Activated CD4-positive, alpha-beta T cell treated with anti-CD3 and anti-CD28 coated beads, Interleukin-2, amount 10 ng/mL, durations not matched to agents 24 days and 14 days (primary cell): ENCODE measurements at regions of chr9 and their contacts with region 1.

Region 1: GRCh38 chr9:27573634-27574590 is 631 bp upstream of the C9orf72 start:
- DNase-seq: peak; percentile 98
- H3K4me3 Mint-ChIP-seq: peak overlapping the region; percentile 88
- H3K27ac Mint-ChIP-seq: peak overlapping the region; percentile 100
- H3K4me1 Mint-ChIP-seq: peaks cover 26% of the 10 kb centered on the region
- H3K27me3 Mint-ChIP-seq: peaks cover 7% of the 10 kb centered on the region

Region 2: DNA sequence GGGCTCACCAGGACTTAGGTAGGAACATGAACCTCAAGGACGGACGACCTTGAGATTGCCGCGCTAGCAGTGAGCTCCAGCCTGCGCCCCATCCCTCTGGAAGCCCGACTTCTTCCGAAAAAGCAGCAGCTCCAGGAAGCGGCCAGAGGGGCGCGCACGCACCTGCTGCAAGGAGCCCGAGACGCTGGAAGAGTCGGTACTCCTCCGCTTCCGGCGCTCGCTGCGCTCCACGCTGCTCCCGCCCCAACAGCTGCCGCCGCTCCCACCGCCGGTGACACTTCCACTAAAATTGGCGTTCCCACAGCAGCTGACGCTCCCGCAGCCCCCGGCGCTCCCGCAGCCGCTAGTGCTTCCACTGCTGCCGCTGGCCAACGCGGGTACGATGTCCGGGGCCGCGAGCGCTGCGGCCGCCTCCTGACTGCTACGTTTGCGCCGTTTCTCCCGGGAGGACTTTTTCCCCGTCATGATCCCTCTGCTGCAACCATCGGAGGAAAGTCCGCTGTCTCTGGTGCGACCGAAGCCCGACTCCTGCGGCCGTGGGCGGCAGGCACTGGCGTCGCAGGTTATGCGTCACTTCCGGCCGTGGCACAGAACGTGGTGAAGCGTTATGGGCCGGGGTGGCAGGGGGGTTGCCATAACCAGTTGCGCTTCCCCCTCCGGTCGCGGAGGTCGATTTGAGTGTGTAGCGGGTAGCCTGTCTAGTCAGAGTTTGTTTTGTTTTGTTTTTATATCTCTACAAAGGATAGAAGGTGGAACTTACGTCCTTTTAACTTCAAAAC is 681.5 kb before region 1 on chr9 and contains the start of gene CAAP1:
- intact Hi-C with region 1: loop called (anchors 5 kb)
- DNase-seq: peak; percentile 97
- H3K4me3 Mint-ChIP-seq: peak within 1 kb of the TSS; percentile 91
- H3K27ac Mint-ChIP-seq: peak within 1 kb of the TSS; percentile 97
- H3K4me1 Mint-ChIP-seq: peaks cover 27% of the 10 kb centered on the region
- H3K27me3 Mint-ChIP-seq: no peaks in the 10 kb centered on the region
- total RNA-seq, gene CAAP1: 19.9 and 23.1 TPM in 2 replicates

Region 3: DNA sequence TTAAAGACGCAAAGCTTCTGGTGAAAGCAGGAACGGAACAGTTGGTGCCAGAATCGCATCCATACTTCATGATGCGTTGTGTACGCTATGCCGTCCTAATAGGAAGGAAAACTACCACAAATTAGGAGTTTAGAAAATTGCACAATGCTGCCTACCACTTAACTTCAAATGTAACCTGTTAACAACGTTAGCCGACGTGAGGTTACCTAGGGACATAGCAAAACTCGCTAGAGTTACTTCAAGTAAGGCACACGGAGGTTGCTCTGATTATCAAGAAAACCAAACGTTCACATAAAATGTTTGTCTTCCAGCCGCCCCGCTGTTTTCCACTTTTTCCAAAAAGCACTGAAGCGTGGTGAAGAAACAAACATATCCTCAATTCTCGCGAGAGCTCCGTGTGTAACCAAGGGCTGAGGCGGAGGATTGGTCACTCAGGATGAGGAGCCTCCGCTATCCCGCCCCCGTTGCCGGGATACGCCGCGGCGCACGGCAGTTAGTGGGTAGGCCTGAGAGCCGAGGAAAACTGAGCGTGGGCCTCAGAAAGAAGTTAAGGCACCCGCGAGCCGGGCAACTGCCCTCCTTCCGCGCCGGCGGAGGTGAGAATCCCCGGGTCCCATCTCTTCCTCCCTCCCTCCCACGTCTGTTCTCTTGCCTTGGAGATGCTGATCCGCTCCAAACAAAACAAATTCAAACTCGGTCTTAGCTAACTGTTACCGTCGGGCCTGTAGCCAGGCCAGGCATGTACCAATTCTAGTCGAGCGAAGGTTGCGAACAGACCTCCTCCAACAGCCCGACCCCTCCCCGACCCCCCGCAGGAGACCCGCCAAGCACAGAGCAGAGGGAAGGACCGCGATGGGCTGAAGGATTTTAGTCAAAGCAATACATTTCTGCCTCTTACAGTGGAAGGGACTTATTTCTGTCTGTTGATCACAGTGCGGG is 617.7 kb before region 1 on chr9 and contains the start of gene IFT74:
- intact Hi-C with region 1: loop called (anchors 1 kb)
- DNase-seq: peak; percentile 99
- H3K4me3 Mint-ChIP-seq: peak within 1 kb of the TSS; percentile 95
- H3K27ac Mint-ChIP-seq: peak within 1 kb of the TSS; percentile 94
- H3K4me1 Mint-ChIP-seq: peaks cover 20% of the 10 kb centered on the region
- H3K27me3 Mint-ChIP-seq: no peaks in the 10 kb centered on the region
- total RNA-seq, gene IFT74: 9.7 and 10.6 TPM in 2 replicates

Region 4: GRCh38 chr9:27529316-27530278 is 44.3 kb before region 1 on chr9 and contains the start of gene MOB3B:
- intact Hi-C with region 1: loop called (anchors 1 kb)
- DNase-seq: peak; percentile 94
- H3K4me3 Mint-ChIP-seq: peak within 1 kb of the TSS; percentile 90
- H3K27ac Mint-ChIP-seq: peak within 1 kb of the TSS; percentile 72
- H3K4me1 Mint-ChIP-seq: peaks cover 11% of the 10 kb centered on the region
- H3K27me3 Mint-ChIP-seq: peaks cover 39% of the 10 kb centered on the region
- total RNA-seq, gene MOB3B: 0.82 and 1.1 TPM in 2 replicates

Region 5: DNA sequence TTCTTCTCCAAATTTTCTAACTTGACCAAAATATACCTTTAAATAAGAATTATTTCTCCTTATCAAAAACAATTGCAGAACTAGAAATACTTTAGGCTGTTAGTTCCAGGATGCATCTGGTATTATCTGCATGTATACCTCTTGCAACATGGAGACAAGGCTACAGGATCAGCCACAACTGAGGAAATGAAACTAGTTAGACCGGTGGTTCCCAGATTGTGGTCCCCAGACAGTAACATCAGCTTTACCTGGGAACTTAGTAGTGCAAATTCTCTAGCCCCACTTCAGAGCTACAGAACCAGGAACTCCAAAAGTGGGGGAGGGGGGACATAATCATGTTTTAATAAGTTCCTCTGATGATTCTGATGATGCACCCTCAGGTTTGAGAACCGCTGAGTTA is 61.0 kb after region 1 on chr9:
- intact Hi-C with region 1: no loop called
- DNase-seq: no peak
- H3K4me3 Mint-ChIP-seq: no peak overlapping the region
- H3K27ac Mint-ChIP-seq: no peak overlapping the region
- H3K4me1 Mint-ChIP-seq: no peaks in the 10 kb centered on the region
- H3K27me3 Mint-ChIP-seq: peaks cover 8% of the 10 kb centered on the region

Region 6: DNA sequence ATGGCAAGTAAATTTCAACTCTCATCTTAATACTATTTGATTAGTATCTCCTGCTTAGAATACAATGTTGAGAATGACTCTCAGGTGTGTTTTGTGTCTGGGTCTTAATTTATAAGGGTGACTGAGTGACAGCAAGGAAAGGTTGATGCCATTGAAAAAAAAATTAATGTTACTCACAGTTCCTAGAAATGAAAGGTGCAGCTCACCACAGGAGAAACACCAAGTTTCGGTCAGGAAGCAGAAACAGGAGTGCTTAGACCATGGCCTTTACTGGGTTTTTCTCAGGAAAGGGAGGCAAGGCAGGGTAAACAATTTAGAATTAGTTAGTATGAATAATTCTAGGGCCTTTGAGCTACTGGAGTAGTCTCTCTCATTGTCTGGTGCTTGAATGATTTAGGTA is 158.6 kb after region 1 on chr9:
- intact Hi-C with region 1: loop called (anchors 2 kb)
- DNase-seq: peak; percentile 61
- H3K4me3 Mint-ChIP-seq: peak overlapping the region; percentile 24
- H3K27ac Mint-ChIP-seq: peak overlapping the region; percentile 71
- H3K4me1 Mint-ChIP-seq: peaks cover 22% of the 10 kb centered on the region
- H3K27me3 Mint-ChIP-seq: no peaks in the 10 kb centered on the region

Region 7: DNA sequence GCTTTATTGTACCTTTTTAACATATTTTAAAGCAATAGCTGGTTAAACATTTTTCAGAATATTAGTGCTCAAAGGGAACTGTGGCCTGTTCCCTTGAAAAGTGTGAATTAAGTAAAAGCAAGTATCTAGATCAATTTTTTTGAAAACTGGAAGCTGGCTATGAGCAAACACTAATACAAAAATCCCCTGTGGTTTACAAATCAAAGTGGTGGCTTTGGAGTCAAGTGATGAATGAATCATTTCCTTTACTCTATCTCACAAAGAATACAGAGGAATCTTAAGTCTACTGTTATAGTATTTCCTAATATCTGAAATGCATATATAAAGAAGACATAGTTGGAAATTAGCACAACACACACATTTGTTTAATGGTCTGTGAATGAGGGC is 211.8 kb after region 1 on chr9:
- intact Hi-C with region 1: loop called (anchors 2 kb)
- DNase-seq: peak; percentile 60
- H3K4me3 Mint-ChIP-seq: peak overlapping the region; percentile 46
- H3K27ac Mint-ChIP-seq: peak overlapping the region; percentile 85
- H3K4me1 Mint-ChIP-seq: peaks cover 15% of the 10 kb centered on the region
- H3K27me3 Mint-ChIP-seq: peaks cover 11% of the 10 kb centered on the region